Dorsolateral prefrontal cortex (tissue), 120 donors: ENCODE measurements at regions of chr5 and their contacts with region 1.

Region 1: DNA sequence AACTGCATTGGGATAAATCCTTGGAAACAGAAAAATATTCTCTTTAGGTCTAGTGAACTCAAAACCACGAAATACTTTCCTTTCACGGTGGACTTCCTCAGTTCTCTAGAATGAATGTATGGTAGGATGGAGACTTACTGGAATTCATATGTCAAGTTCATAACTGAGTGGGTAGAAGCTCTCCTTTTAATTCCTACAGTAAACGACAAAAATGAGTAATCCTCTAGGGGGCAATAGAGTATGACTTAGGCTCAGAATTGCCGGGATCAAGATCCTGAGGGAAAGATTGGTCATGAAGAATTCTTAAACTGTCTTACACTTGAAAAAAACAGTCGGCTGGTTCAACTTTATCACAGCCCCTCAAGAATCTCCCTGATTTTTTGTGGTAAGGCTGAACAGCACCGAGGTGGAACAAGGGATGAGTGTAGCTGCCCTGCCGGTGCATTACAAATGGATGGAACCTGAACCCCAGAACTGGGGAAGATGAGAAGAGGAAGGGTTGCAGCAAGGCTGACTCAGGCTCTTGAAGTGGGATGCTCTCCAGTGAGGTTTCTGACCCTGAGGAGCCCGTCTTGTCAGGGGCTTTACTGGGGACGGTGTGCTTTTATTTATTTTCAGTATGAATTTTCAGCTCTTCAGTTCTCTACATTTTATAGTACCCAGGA is 14.0 kb upstream of the LOX start:
- DNase-seq: no peak
- H3K4me3 ChIP-seq: no peak overlapping the region
- H3K27ac ChIP-seq: no peak overlapping the region
- H3K27me3 ChIP-seq: no peaks in the 10 kb centered on the region
- CTCF ChIP-seq: peak; percentile 14 to 72 (median 50)

Region 2: GRCh38 chr5:121976979-121977378 is 115.1 kb before region 1 on chr5:
- intact Hi-C with region 1: loop called in 1 of 2 experiments (anchors 10 kb)
- DNase-seq: no peak
- H3K4me3 ChIP-seq: no peak overlapping the region
- H3K27ac ChIP-seq: no peak overlapping the region
- H3K27me3 ChIP-seq: no peaks in the 10 kb centered on the region
- CTCF ChIP-seq: no peak